CD8-positive, alpha-beta T cell (primary cell): ENCODE measurements at regions of chr3 and their contacts with region 1.

Region 1: DNA sequence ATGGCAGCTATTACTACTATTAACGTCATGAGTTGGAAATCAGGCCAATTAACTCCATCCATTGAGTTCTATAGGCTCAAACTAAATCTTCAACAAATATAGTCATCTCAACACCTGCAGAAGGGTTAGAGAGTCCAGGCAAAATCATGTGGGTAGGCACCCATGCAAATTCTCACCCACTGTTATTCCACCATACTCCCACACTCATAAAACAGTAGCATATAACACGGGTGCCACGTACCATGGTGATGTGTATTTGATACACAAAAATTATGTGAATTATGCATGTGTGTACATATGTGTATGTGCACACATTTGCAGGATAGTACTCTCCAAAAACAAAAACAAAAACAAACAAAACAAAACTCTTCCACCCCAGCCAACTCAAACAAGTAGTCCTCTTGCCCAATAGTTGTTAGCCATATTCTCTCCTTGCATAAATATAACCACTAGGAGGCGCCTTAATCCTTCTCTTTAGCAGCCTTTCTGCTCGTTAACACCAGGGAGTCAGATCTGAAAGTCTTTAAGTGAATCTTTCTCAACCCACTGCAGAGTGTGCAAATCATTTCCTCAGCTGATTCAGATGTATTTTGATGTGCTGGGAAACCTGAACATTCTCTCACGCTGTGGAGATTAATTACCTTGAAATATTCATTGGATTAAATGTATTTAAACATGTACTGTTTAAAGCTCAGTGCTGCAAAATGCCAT is 38.0 kb upstream of the COPB2 start:
- DNase-seq: peak in 2 of 9 experiments; percentile 47 to 58
- ATAC-seq: no peak
- H3K4me3 ChIP-seq: no peak overlapping the region
- H3K4me3 Mint-ChIP-seq: no peak overlapping the region
- H3K27ac ChIP-seq: no peak overlapping the region
- H3K27ac Mint-ChIP-seq: no peak overlapping the region
- H3K4me1 ChIP-seq: no peaks in the 10 kb centered on the region
- H3K4me1 Mint-ChIP-seq: peaks cover 4% of the 10 kb centered on the region
- H3K27me3 ChIP-seq: peaks cover 0 to 2% of the 10 kb centered on the region in 2 experiments
- H3K27me3 Mint-ChIP-seq: no peaks in the 10 kb centered on the region
- CTCF ChIP-seq: peak; percentile 73

Region 2: DNA sequence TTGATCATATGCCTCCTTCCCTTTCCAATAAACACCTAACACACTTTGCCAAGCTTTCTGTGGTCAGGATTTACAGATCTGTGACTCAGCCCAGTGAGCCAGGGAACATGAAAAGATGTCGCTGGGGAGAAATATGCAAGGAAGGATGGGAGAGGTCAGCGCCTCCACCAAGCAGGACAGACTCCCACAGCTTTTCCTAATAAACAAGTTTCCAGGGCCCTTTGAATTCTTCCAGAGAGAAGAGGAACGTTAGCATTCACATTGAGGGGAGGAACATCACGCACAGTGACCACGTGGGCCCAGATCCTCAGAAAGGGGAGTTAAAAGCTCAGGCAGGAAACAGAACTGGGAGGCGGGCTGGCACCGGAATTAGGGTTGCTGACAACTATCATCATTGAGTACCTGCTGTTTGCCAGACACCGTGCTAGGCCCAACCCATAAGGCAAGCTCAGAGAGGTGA is 116.9 kb before region 1 on chr3:
- CTCF ChIA-PET with region 1: no interaction called
- POLR2A ChIA-PET with region 1: no interaction called
- intact Hi-C with region 1: no loop called
- DNase-seq: no peak
- ATAC-seq: no peak
- H3K4me3 ChIP-seq: no peak overlapping the region
- H3K4me3 Mint-ChIP-seq: no peak overlapping the region
- H3K27ac ChIP-seq: no peak overlapping the region
- H3K27ac Mint-ChIP-seq: no peak overlapping the region
- H3K4me1 ChIP-seq: no peaks in the 10 kb centered on the region
- H3K4me1 Mint-ChIP-seq: no peaks in the 10 kb centered on the region
- H3K27me3 ChIP-seq: no peaks in the 10 kb centered on the region
- H3K27me3 Mint-ChIP-seq: peaks cover 12% of the 10 kb centered on the region
- CTCF ChIP-seq: no peak

Region 3: GRCh38 chr3:140736863-140737460 is 1309.5 kb after region 1 on chr3:
- CTCF ChIA-PET with region 1: no interaction called
- POLR2A ChIA-PET with region 1: no interaction called
- intact Hi-C with region 1: loop called (anchors 2 to 10 kb)
- DNase-seq: peak in 2 of 9 experiments; percentile 6 to 17
- ATAC-seq: no peak
- H3K4me3 ChIP-seq: no peak overlapping the region
- H3K4me3 Mint-ChIP-seq: no peak overlapping the region
- H3K27ac ChIP-seq: no peak overlapping the region
- H3K27ac Mint-ChIP-seq: no peak overlapping the region
- H3K4me1 ChIP-seq: no peaks in the 10 kb centered on the region
- H3K4me1 Mint-ChIP-seq: peaks cover 3% of the 10 kb centered on the region
- H3K27me3 ChIP-seq: no peaks in the 10 kb centered on the region
- H3K27me3 Mint-ChIP-seq: no peaks in the 10 kb centered on the region
- CTCF ChIP-seq: no peak